Esophagus muscularis mucosa (tissue), 4 donors: ENCODE measurements at regions of chr11 and their contacts with region 1.

Region 1: DNA sequence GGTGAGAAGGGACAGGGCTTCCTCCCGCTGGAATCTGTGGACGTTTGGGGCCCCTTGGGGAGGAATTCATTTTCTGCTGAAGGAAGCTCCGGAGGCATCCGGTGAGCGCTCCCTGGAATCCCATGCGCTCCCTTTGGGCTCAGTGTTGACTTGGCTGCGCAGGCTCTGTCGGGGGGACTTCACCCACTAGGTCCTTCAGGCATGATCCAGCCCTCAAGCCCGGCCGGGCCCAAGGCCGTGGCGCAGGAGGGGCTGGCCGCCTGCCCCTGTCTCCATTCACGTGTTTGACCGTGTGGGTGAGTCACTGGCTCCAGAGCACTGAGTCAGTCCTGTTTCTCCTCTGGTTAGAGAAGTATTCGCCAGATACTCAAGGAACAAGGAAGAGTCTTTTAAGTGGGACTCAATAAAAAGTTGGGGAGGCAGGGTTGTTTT is 1.4 kb downstream of the CTTN start:
- DNase-seq: peak; percentile 96
- H3K4me3 ChIP-seq: peak overlapping the region; percentile 86 to 99 (median 96)
- H3K27ac ChIP-seq: peak overlapping the region; percentile 90 to 96 (median 93)
- H3K4me1 ChIP-seq: peaks cover 21 to 62% (median 54%) of the 10 kb centered on the region in 4 donors
- H3K27me3 ChIP-seq: no peaks in the 10 kb centered on the region
- CTCF ChIP-seq: no peak
- EP300 ChIP-seq: no peak
- POLR2A ChIP-seq: no peak

Region 2: DNA sequence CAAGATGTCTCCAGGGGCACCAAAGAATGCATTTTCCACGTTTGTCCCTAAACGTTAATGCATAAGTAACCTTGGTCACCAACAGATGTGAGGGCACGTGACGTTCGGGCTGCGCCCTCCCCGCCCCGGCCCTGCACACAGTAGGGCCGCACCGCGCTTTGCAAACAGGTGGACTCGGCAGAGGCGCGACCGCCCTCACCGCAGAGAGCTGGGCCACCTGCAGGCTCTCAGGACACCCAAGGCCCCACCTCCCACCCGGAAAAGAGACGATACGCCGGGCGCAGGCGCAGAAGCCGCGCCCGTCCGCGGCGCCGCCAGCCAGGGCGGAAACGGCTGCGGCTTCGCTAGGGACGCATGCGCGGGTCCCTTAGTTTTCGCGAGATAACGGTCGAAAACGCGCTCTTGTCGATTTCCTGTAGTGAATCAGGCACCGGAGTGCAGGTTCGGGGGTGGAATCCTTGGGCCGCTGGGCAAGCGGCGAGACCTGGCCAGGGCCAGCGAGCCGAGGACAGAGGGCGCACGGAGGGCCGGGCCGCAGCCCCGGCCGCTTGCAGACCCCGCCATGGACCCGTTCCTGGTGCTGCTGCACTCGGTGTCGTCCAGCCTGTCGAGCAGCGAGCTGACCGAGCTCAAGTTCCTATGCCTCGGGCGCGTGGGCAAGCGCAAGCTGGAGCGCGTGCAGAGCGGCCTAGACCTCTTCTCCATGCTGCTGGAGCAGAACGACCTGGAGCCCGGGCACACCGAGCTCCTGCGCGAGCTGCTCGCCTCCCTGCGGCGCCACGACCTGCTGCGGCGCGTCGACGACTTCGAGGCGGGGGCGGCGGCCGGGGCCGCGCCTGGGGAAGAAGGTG is 196.6 kb before region 1 on chr11 and contains the start of gene FADD:
- intact Hi-C with region 1: loop called (anchors 5 kb)
- DNase-seq: peak; percentile 96
- H3K4me3 ChIP-seq: peak within 1 kb of the TSS; percentile 79 to 96 (median 92)
- H3K27ac ChIP-seq: peak within 1 kb of the TSS; percentile 85 to 96 (median 91)
- H3K4me1 ChIP-seq: peaks cover 22 to 39% (median 25%) of the 10 kb centered on the region in 4 donors
- H3K27me3 ChIP-seq: peaks cover 0 to 12% (median 0%) of the 10 kb centered on the region in 4 donors
- CTCF ChIP-seq: peak in 1 of 3 experiments; percentile 11
- EP300 ChIP-seq: no peak
- POLR2A ChIP-seq: peak; percentile 52
- total RNA-seq, gene FADD: 14.5 to 33.3 (median 21.5) TPM